Activated T-helper 2 cell treated with anti-CD3 and anti-CD28 coated beads, Interferon-gamma antibody, Interleukin-2, Interleukin-4, amounts not matched to agents 10 μg/mL and 5 μg/mL and 100 μg/mL, durations not matched to agents 14 hours and 24 hours and 36 hours (primary cell): ENCODE measurements at regions of chr18 and their contacts with region 1.

Region 1: DNA sequence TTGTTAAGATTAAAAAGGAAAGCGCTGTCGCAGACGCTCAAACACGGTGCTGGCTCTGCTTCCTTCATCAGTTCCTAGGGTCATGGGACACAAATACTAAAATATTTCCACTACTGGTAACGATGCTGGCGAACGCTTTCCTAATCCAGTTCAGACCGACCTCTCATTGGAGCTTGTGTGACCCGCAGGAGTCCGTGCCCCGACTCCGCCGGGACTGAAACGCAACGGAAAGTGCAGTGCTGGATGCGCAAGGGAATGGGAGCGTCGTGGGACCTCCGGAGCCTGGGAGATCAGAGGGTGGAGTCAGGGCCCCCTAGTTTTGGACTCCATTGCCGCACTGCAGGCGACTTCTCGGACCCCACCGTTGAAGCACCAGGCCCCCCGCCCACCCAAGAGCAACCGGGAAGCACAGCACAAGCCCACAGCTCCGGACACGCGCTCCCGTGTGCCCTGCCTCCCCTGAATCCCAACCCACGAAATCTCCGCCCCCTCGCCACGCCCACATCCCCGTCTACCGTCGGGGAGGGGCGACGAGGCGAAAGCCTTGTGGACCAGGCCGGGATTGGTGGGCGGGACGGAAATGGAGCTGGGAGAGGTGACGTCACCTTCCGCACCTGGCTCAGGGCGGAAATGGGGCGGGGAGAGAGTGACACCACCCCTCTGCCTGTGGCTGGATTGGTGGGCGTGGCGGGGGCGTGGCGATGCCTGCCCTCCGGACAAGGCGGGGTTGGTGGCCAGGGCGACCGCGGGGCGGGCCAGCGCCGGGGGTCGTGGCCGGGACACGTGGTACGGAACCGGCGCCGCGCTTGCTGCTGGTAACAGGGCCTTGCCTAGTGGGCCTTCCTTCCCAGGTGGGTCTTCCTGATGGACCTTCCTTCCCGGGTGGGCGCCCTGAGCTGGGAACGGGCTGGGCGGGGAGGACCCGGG is at the start of gene CNDP2:
- DNase-seq: peak; percentile 97
- H3K4me3 Mint-ChIP-seq: peak within 1 kb of the TSS; percentile 93
- H3K27ac Mint-ChIP-seq: peak within 1 kb of the TSS; percentile 96
- H3K4me1 Mint-ChIP-seq: peaks cover 29% of the 10 kb centered on the region
- H3K27me3 Mint-ChIP-seq: peaks cover 10% of the 10 kb centered on the region
- total RNA-seq, gene CNDP2: 158 and 166 TPM in 2 replicates

Region 2: GRCh38 chr18:72940986-72941385 is 1554.9 kb before region 1 on chr18:
- intact Hi-C with region 1: no loop called
- DNase-seq: no peak
- H3K4me3 Mint-ChIP-seq: no peak overlapping the region
- H3K27ac Mint-ChIP-seq: no peak overlapping the region
- H3K4me1 Mint-ChIP-seq: no peaks in the 10 kb centered on the region
- H3K27me3 Mint-ChIP-seq: no peaks in the 10 kb centered on the region

Region 3: GRCh38 chr18:74063023-74063422 is 432.8 kb before region 1 on chr18:
- intact Hi-C with region 1: loop called (anchors 2 kb)
- DNase-seq: peak; percentile 25
- H3K4me3 Mint-ChIP-seq: no peak overlapping the region
- H3K27ac Mint-ChIP-seq: peak overlapping the region; percentile 75
- H3K4me1 Mint-ChIP-seq: peaks cover 51% of the 10 kb centered on the region
- H3K27me3 Mint-ChIP-seq: no peaks in the 10 kb centered on the region

Region 4: DNA sequence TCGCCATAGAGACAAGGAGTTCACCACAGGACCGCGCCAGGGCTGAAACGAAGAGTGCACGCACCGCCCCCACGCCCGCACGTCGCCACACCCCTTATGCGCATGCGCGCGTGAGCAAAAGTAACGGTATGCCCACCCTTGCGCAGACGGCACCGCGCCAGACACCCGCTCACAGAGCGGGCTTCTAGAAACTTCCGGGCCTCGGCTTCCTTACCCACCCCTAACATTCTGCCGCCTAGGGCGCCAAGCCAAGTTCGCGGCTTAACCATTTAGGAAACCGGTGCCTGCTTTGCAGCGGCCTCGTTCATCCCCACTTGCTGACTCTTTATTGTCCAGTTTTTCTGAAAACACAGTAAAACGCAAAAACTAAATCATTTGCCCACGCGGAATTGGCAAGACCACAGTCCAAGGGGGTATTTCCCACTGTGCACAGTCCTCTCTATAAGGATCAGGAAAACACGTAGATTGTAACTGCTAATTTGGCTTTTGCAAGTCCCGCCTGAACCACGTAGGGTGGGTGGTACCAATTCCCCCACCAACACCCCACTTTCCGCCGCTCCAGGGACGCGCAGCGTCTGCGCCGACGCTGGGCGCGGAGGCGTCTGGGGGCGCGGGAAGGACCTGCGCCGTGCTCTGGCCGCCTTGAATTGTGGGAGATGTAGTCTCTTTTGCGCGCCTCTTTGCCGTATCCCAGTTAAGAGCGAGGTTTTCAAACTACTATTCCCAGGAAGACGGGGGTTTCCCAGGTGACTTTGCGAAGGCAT is 347.9 kb before region 1 on chr18 and contains the starts of genes FBXO15 and TIMM21:
- intact Hi-C with region 1: loop called (anchors 1 kb)
- DNase-seq: peak; percentile 95
- H3K4me3 Mint-ChIP-seq: peak within 1 kb of the TSS; percentile 99
- H3K27ac Mint-ChIP-seq: peak within 1 kb of the TSS; percentile 98
- H3K4me1 Mint-ChIP-seq: peaks cover 45% of the 10 kb centered on the region
- H3K27me3 Mint-ChIP-seq: peaks cover 4% of the 10 kb centered on the region
- total RNA-seq, gene FBXO15: 0.91 and 1.1 TPM in 2 replicates
- total RNA-seq, gene TIMM21: 48.3 and 50.0 TPM in 2 replicates

Region 5: DNA sequence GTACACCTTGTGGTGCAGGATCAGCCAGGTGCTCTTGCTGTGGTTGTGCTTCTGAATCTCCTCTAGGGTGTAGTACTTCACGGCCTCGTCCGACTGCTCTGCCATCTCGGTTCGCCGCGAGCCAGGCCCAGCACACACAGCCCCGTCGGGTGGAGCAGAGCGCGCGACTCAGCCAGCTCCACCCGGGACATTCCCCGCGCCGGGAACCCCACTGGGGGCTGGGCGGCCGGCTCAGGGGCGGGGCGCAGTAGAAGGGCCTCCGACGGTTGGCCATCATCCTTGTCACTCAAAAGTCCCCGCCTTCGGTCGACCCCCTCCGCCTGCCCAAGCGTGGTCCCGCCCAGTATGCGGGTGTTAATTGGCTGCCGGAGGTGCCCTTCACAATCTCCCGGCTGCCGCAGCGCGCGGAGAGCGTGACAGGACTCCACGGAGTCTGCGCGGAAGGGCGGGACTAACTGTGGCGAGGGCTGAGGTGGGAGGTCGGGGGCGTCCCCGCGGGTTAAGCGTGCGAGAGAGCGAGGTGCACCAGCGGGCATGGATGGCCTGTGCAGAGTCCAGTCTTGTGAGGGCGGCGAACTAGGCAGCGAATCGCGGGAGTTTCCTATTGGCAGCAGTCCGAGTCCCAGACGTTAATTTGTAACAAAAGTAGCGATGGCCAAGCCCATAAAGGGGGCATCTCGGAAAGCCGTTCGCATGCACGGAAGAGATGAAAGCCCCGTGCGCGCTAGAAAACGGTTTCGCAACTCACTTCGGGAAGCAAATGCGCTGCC is 203.9 kb before region 1 on chr18 and contains the start of gene CYB5A:
- intact Hi-C with region 1: loop called (anchors 2 kb)
- DNase-seq: peak; percentile 93
- H3K4me3 Mint-ChIP-seq: peak within 1 kb of the TSS; percentile 94
- H3K27ac Mint-ChIP-seq: peak within 1 kb of the TSS; percentile 78
- H3K4me1 Mint-ChIP-seq: peaks cover 5% of the 10 kb centered on the region
- H3K27me3 Mint-ChIP-seq: peaks cover 15% of the 10 kb centered on the region
- total RNA-seq, gene CYB5A: 36.8 and 37.9 TPM in 2 replicates

Region 6: GRCh38 chr18:74370115-74370514 is 125.7 kb before region 1 on chr18:
- intact Hi-C with region 1: loop called (anchors 1 kb)
- DNase-seq: no peak
- H3K4me3 Mint-ChIP-seq: no peak overlapping the region
- H3K27ac Mint-ChIP-seq: no peak overlapping the region
- H3K4me1 Mint-ChIP-seq: peaks cover 47% of the 10 kb centered on the region
- H3K27me3 Mint-ChIP-seq: peaks cover 43% of the 10 kb centered on the region

Region 7: GRCh38 chr18:74597662-74598349 is 102.0 kb after region 1 on chr18 and contains the start of gene ZNF407:
- intact Hi-C with region 1: loop called (anchors 1 kb)
- DNase-seq: peak; percentile 85
- H3K4me3 Mint-ChIP-seq: peak within 1 kb of the TSS; percentile 96
- H3K27ac Mint-ChIP-seq: peak within 1 kb of the TSS; percentile 98
- H3K4me1 Mint-ChIP-seq: peaks cover 44% of the 10 kb centered on the region
- H3K27me3 Mint-ChIP-seq: no peaks in the 10 kb centered on the region
- total RNA-seq, gene ZNF407: 18.3 TPM in 2 replicates

Region 8: DNA sequence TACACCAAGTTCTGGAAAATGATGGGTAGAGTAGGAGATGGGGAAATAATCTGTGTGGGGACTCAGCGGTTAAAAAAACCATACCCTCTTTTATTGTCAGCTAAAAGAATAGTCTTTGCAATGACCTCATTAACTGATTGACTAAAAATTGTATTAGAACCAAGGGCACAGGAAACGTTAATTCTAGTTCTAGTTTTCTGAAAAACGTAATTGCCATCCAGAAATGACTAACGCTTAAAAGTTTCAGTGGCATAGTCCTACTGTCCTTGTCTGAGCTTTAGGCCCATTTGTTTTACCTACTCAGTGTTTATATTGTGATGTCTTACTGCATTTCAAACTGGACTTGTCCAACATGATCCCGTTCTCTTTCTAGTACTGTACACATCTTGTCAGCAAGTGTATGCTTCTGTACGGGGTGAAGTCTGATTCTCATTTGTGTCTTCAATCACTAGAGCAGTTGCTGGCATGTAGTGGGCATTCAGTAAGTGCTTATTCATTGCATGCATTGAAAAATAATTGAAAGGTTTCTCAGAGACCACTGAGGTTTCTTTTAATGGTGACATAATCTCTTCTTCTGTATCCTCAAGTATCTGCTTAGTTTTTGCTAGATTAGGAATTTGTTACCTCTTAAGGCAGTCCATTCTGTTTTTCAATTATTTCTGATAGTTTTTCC is 183.3 kb after region 1 on chr18:
- intact Hi-C with region 1: no loop called
- DNase-seq: no peak
- H3K4me3 Mint-ChIP-seq: no peak overlapping the region
- H3K27ac Mint-ChIP-seq: no peak overlapping the region
- H3K4me1 Mint-ChIP-seq: no peaks in the 10 kb centered on the region
- H3K27me3 Mint-ChIP-seq: no peaks in the 10 kb centered on the region

Region 9: GRCh38 chr18:75209129-75209950 is 713.5 kb after region 1 on chr18 and contains the start of gene PTGR3:
- intact Hi-C with region 1: loop called (anchors 1 kb)
- DNase-seq: peak; percentile 81
- H3K4me3 Mint-ChIP-seq: peak within 1 kb of the TSS; percentile 96
- H3K27ac Mint-ChIP-seq: peak within 1 kb of the TSS; percentile 96
- H3K4me1 Mint-ChIP-seq: peaks cover 48% of the 10 kb centered on the region
- H3K27me3 Mint-ChIP-seq: peaks cover 29% of the 10 kb centered on the region
- total RNA-seq, gene PTGR3: 26.0 and 28.6 TPM in 2 replicates